Thyroid gland (tissue), 4 donors: ENCODE measurements at regions of chr3 and their contacts with region 1.

Region 1: GRCh38 chr3:73100741-73101559 is 39.5 kb downstream of the EBLN2 start:
- DNase-seq: peak; percentile 79 to 83
- H3K4me3 ChIP-seq: no peak overlapping the region
- H3K27ac ChIP-seq: no peak overlapping the region
- H3K4me1 ChIP-seq: no peaks in the 10 kb centered on the region
- H3K27me3 ChIP-seq: no peaks in the 10 kb centered on the region
- CTCF ChIP-seq: peak; percentile 72 to 92 (median 85)
- POLR2A ChIP-seq: no peak

Region 2: DNA sequence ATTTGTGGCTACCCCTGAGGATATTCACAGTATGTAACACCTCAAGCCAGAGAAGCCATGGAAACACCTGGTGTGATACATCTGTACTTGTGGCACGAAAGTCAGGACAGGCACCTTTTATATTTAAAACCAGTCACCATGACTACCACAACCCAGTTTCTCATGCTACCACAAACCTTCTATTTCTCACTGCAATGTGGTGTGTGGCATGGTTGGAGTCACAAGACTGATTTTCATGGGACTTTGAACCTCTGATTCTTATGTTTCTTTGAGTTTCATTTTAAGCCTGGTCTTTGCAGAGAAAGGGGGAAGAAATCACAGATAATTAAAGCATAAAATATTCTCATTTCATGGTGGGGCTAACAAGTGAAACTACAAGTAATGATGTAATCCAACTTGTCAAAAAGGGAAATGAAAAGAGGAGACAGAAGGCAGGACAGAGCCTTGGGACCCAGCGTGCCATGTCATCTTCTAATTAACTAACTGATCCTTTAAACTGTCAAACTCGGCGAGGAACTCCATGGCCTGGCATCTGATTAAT is 347.9 kb after region 1 on chr3:
- intact Hi-C with region 1: loop called (anchors 10 kb)
- DNase-seq: no peak
- H3K4me3 ChIP-seq: no peak overlapping the region
- H3K27ac ChIP-seq: no peak overlapping the region
- H3K4me1 ChIP-seq: peaks cover 3 to 14% of the 10 kb centered on the region in 2 donors
- H3K27me3 ChIP-seq: no peaks in the 10 kb centered on the region
- CTCF ChIP-seq: no peak
- POLR2A ChIP-seq: no peak

Region 3: GRCh38 chr3:73502609-73503583 is 401.9 kb after region 1 on chr3:
- intact Hi-C with region 1: loop called (anchors 5 kb)
- DNase-seq: peak; percentile 75 to 76
- H3K4me3 ChIP-seq: no peak overlapping the region
- H3K27ac ChIP-seq: no peak overlapping the region
- H3K4me1 ChIP-seq: no peaks in the 10 kb centered on the region
- H3K27me3 ChIP-seq: no peaks in the 10 kb centered on the region
- CTCF ChIP-seq: peak; percentile 69 to 89 (median 84)
- POLR2A ChIP-seq: no peak

Region 4: GRCh38 chr3:74273091-74273490 is 1172.1 kb after region 1 on chr3:
- intact Hi-C with region 1: no loop called
- DNase-seq: no peak
- H3K4me3 ChIP-seq: no peak overlapping the region
- H3K27ac ChIP-seq: no peak overlapping the region
- H3K4me1 ChIP-seq: no peaks in the 10 kb centered on the region
- H3K27me3 ChIP-seq: no peaks in the 10 kb centered on the region
- CTCF ChIP-seq: no peak
- POLR2A ChIP-seq: no peak